Activated CD8-positive, alpha-beta memory T cell treated with anti-CD3 and anti-CD28 coated beads, Interleukin-2, amount 10 ng/mL, durations not matched to agents 7 days and 5 days (primary cell): ENCODE measurements at regions of chr17 and their contacts with region 1.

Region 1: GRCh38 chr17:8079291-8080207 is 8.0 kb downstream of the ALOX12B start:
- DNase-seq: peak; percentile 85
- ATAC-seq: peak; percentile 86
- H3K4me3 Mint-ChIP-seq: peak overlapping the region; percentile 87
- H3K27ac Mint-ChIP-seq: peak overlapping the region; percentile 81
- H3K4me1 Mint-ChIP-seq: peaks cover 12% of the 10 kb centered on the region
- H3K27me3 Mint-ChIP-seq: peaks cover 20% of the 10 kb centered on the region

Region 2: GRCh38 chr17:8103549-8103948 is 24.0 kb after region 1 on chr17:
- CTCF ChIA-PET with region 1: interaction called, 13 read pairs
- DNase-seq: no peak
- ATAC-seq: no peak
- H3K4me3 Mint-ChIP-seq: no peak overlapping the region
- H3K27ac Mint-ChIP-seq: no peak overlapping the region
- H3K4me1 Mint-ChIP-seq: peaks cover 6% of the 10 kb centered on the region
- H3K27me3 Mint-ChIP-seq: no peaks in the 10 kb centered on the region